ENCODE measurements at regions of chr21 and their contacts with region 1.

Region 1: GRCh38 chr21:46285761-46286496 is at the start of gene YBEY:
- DNase-seq: peak; percentile 92 to 95
- ATAC-seq: peak; percentile 96 to 98 (median 98)
- H3K4me3 ChIP-seq: peak within 1 kb of the TSS; percentile 93
- H3K27ac ChIP-seq: peak within 1 kb of the TSS; percentile 96
- H3K4me1 ChIP-seq: peaks cover 51% of the 10 kb centered on the region
- H3K27me3 ChIP-seq: no peaks in the 10 kb centered on the region
- CTCF ChIP-seq: peak; percentile 33
- total RNA-seq, gene YBEY: 4.7 to 11.0 (median 7.1) TPM

Region 2: GRCh38 chr21:46144464-46145070 is 141.4 kb before region 1 on chr21:
- intact Hi-C with region 1: loop called in 1 of 2 experiments (anchors 10 kb)
- DNase-seq: peak in 1 of 2 donors; percentile 39
- ATAC-seq: no peak
- H3K4me3 ChIP-seq: no peak overlapping the region
- H3K27ac ChIP-seq: no peak overlapping the region
- H3K4me1 ChIP-seq: no peaks in the 10 kb centered on the region
- H3K27me3 ChIP-seq: no peaks in the 10 kb centered on the region
- CTCF ChIP-seq: no peak

Region 3: GRCh38 chr21:46264690-46265144 is 21.2 kb before region 1 on chr21:
- intact Hi-C with region 1: no loop called
- DNase-seq: no peak
- ATAC-seq: peak in 3 of 4 donors; percentile 19 to 31 (median 25)
- H3K4me3 ChIP-seq: no peak overlapping the region
- H3K27ac ChIP-seq: no peak overlapping the region
- H3K4me1 ChIP-seq: no peaks in the 10 kb centered on the region
- H3K27me3 ChIP-seq: no peaks in the 10 kb centered on the region
- CTCF ChIP-seq: no peak

Region 4: GRCh38 chr21:46323227-46324128 is 37.5 kb after region 1 on chr21 and contains the start of gene C21orf58:
- intact Hi-C with region 1: loop called in 1 of 2 experiments (anchors 1 kb)
- DNase-seq: peak; percentile 98 to 99
- ATAC-seq: peak; percentile 93 to 95 (median 94)
- H3K4me3 ChIP-seq: peak within 1 kb of the TSS; percentile 77
- H3K27ac ChIP-seq: peak within 1 kb of the TSS; percentile 94
- H3K4me1 ChIP-seq: peaks cover 24% of the 10 kb centered on the region
- H3K27me3 ChIP-seq: no peaks in the 10 kb centered on the region
- CTCF ChIP-seq: no peak
- total RNA-seq, gene C21orf58: 0.49 to 3.0 (median 1.1) TPM

Region 5: GRCh38 chr21:46334351-46335140 is 48.6 kb after region 1 on chr21:
- intact Hi-C with region 1: loop called in 1 of 2 experiments (anchors 10 kb)
- DNase-seq: no peak
- ATAC-seq: no peak
- H3K4me3 ChIP-seq: no peak overlapping the region
- H3K27ac ChIP-seq: no peak overlapping the region
- H3K4me1 ChIP-seq: peaks cover 3% of the 10 kb centered on the region
- H3K27me3 ChIP-seq: no peaks in the 10 kb centered on the region
- CTCF ChIP-seq: no peak